ENCODE measurements at regions of chr12 and their contacts with region 1.

Region 1: GRCh38 chr12:12376646-12377448 is 20.0 kb downstream of the BORCS5 start:
- DNase-seq: peak; percentile 27
- ATAC-seq: peak; percentile 75
- H3K4me3 Mint-ChIP-seq: no peak overlapping the region
- H3K27ac Mint-ChIP-seq: peak overlapping the region; percentile 45
- H3K4me1 Mint-ChIP-seq: peaks cover 37% of the 10 kb centered on the region
- H3K27me3 Mint-ChIP-seq: no peaks in the 10 kb centered on the region

Region 2: DNA sequence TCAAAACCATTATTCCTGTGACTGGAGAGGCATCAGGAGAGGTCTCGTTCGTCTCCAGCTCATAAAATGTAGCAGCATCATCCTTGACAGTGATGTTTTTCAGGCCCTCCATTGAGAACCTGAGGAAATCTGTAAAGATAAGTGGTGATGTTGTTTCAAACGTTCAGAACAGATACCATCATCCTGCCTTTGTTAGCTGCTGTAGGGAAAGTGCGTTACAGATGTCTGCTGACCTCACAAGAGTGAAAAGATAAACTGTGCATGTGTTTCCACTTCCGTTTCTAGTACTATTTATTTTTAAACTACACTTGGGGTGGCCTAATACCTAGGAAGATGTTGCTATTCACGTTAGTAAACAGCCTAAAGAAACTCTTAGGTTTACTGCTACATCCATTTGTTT is 277.7 kb before region 1 on chr12:
- CTCF ChIA-PET with region 1: no interaction called
- POLR2A ChIA-PET with region 1: no interaction called
- intact Hi-C with region 1: no loop called
- DNase-seq: no peak
- ATAC-seq: no peak
- H3K4me3 Mint-ChIP-seq: no peak overlapping the region
- H3K27ac Mint-ChIP-seq: no peak overlapping the region
- H3K4me1 Mint-ChIP-seq: no peaks in the 10 kb centered on the region
- H3K27me3 Mint-ChIP-seq: no peaks in the 10 kb centered on the region

Region 3: DNA sequence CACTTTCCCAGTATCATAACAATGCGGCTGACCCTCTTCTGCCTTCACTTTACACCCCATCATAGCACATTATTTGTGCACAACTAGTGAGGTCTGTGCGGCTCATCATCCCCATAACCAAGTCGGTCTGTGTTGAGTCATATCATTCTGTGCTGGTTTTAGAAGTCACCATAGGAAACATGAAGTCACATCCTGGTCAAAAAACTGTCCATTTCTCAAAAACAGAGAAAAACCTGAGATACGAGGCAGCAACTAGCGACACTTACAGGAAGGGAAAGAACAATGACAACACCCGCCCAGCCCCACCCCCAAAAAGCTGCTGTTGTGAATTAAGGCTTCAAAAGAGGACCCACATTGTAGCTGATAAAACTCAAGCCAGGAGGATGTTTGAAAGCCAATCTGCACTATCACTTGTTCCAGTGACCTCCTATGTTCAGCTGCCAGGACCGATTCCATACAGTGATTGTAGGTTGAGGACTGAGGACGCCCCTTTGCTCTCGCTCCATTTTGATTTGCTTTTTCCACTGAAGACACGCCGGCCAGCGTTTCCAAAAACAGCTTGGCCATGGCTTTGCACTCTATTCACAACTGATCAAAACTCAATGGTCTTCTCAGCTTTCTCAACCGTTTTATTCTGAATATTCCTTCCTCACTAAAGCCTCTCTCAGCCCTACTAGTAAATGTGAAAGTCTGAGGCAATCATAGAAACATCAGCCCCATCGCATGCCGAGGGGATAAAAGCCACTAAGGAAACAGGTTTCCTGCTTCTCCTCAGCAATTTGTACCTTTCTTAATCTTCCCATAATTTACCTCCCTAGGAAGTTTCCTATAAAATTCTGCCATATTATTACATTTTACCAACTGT is 98.3 kb after region 1 on chr12:
- CTCF ChIA-PET with region 1: interaction called, 9 read pairs
- POLR2A ChIA-PET with region 1: interaction called, 9 read pairs
- intact Hi-C with region 1: loop called (anchors 2 kb)
- DNase-seq: peak; percentile 78
- ATAC-seq: peak; percentile 87
- H3K4me3 Mint-ChIP-seq: peak overlapping the region; percentile 59
- H3K27ac Mint-ChIP-seq: peak overlapping the region; percentile 97
- H3K4me1 Mint-ChIP-seq: peaks cover 81% of the 10 kb centered on the region
- H3K27me3 Mint-ChIP-seq: no peaks in the 10 kb centered on the region

Region 4: GRCh38 chr12:12611512-12612306 is 234.9 kb after region 1 on chr12 and contains the start of gene CREBL2:
- CTCF ChIA-PET with region 1: interaction called, 5 read pairs
- POLR2A ChIA-PET with region 1: no interaction called
- intact Hi-C with region 1: loop called (anchors 1 to 2 kb)
- DNase-seq: peak; percentile 92
- ATAC-seq: peak; percentile 77
- H3K4me3 Mint-ChIP-seq: peak within 1 kb of the TSS; percentile 93
- H3K27ac Mint-ChIP-seq: peak within 1 kb of the TSS; percentile 98
- H3K4me1 Mint-ChIP-seq: peaks cover 68% of the 10 kb centered on the region
- H3K27me3 Mint-ChIP-seq: no peaks in the 10 kb centered on the region
- total RNA-seq, gene CREBL2: 16.8 to 20.2 TPM

Region 5: GRCh38 chr12:12661086-12661485 is 284.2 kb after region 1 on chr12:
- CTCF ChIA-PET with region 1: interaction called, 29 read pairs
- POLR2A ChIA-PET with region 1: no interaction called
- intact Hi-C with region 1: loop called (anchors 1 kb)
- DNase-seq: no peak
- ATAC-seq: no peak
- H3K4me3 Mint-ChIP-seq: no peak overlapping the region
- H3K27ac Mint-ChIP-seq: no peak overlapping the region
- H3K4me1 Mint-ChIP-seq: peaks cover under 1% of the 10 kb centered on the region
- H3K27me3 Mint-ChIP-seq: no peaks in the 10 kb centered on the region

Region 6: DNA sequence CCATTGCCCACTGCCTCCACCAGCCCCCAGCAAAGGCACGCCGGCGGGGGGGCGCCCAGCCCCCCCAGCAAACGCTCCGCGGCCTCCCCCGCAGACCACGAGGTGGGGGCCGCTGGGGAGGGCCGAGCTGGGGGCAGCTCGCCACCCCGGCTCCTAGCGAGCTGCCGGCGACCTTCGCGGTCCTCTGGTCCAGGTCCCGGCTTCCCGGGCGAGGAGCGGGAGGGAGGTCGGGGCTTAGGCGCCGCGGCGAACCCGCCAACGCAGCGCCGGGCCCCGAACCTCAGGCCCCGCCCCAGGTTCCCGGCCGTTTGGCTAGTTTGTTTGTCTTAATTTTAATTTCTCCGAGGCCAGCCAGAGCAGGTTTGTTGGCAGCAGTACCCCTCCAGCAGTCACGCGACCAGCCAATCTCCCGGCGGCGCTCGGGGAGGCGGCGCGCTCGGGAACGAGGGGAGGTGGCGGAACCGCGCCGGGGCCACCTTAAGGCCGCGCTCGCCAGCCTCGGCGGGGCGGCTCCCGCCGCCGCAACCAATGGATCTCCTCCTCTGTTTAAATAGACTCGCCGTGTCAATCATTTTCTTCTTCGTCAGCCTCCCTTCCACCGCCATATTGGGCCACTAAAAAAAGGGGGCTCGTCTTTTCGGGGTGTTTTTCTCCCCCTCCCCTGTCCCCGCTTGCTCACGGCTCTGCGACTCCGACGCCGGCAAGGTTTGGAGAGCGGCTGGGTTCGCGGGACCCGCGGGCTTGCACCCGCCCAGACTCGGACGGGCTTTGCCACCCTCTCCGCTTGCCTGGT is 340.1 kb after region 1 on chr12 and contains the start of gene CDKN1B:
- CTCF ChIA-PET with region 1: interaction called, 8 read pairs
- POLR2A ChIA-PET with region 1: interaction called, 8 read pairs
- intact Hi-C with region 1: loop called in 1 of 2 experiments (anchors 5 kb)
- DNase-seq: peak; percentile 93
- ATAC-seq: peak; percentile 69
- H3K4me3 Mint-ChIP-seq: peak within 1 kb of the TSS; percentile 93
- H3K27ac Mint-ChIP-seq: peak within 1 kb of the TSS; percentile 98
- H3K4me1 Mint-ChIP-seq: peaks cover 53% of the 10 kb centered on the region
- H3K27me3 Mint-ChIP-seq: no peaks in the 10 kb centered on the region
- total RNA-seq, gene CDKN1B: 34.2 to 37.0 TPM

Measured in activated CD4-positive, alpha-beta T cell treated with anti-CD3 and anti-CD28 coated beads for 36 hours (primary cell).